Activated CD8-positive, alpha-beta memory T cell treated with anti-CD3 and anti-CD28 coated beads, Interleukin-2, amount 10 ng/mL, durations not matched to agents 7 days and 5 days (primary cell): ENCODE measurements at regions of chr12 and their contacts with region 1.

Region 1: GRCh38 chr12:4276524-4277204 is 3.1 kb downstream of the CCND2 start:
- DNase-seq: peak; percentile 93
- ATAC-seq: peak; percentile 16
- H3K4me3 Mint-ChIP-seq: peak overlapping the region; percentile 88
- H3K27ac Mint-ChIP-seq: peak overlapping the region; percentile 100
- H3K4me1 Mint-ChIP-seq: peaks cover 57% of the 10 kb centered on the region
- H3K27me3 Mint-ChIP-seq: no peaks in the 10 kb centered on the region

Region 2: GRCh38 chr12:3988519-3989448 is 287.9 kb before region 1 on chr12:
- CTCF ChIA-PET with region 1: interaction called, 30 read pairs
- DNase-seq: no peak
- ATAC-seq: peak; percentile 51
- H3K4me3 Mint-ChIP-seq: no peak overlapping the region
- H3K27ac Mint-ChIP-seq: peak overlapping the region; percentile 56
- H3K4me1 Mint-ChIP-seq: peaks cover 22% of the 10 kb centered on the region
- H3K27me3 Mint-ChIP-seq: peaks cover 17% of the 10 kb centered on the region

Region 3: DNA sequence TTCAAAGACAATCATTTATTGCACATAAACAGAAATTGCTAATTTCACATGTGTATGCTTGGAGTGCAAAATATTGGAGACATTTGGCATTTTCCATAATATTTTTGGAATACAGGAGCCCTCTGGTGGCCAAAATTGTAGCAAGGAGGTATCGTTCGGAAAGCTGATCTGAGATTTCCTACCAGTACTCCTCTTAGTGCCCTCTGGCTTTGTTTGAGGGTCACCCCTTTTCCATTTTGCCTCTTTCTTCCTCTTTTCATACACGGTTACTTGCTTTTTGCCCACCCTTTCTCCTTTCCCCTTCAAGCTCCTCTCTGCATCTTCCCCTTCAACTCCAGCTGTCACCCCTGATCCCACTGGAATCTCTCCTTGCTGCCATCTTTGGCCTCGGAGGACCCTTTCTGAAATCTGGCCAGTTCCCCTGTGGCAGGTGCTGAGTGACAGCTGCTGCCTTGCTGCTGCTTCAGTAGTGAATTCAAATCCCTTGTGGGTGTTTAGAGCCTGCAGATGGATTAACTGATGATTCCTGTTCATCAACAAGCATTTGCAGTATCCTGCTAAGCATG is 238.8 kb before region 1 on chr12:
- CTCF ChIA-PET with region 1: interaction called, 23 read pairs
- DNase-seq: no peak
- ATAC-seq: no peak
- H3K4me3 Mint-ChIP-seq: no peak overlapping the region
- H3K27ac Mint-ChIP-seq: no peak overlapping the region
- H3K4me1 Mint-ChIP-seq: peaks cover 6% of the 10 kb centered on the region
- H3K27me3 Mint-ChIP-seq: peaks cover 26% of the 10 kb centered on the region

Region 4: DNA sequence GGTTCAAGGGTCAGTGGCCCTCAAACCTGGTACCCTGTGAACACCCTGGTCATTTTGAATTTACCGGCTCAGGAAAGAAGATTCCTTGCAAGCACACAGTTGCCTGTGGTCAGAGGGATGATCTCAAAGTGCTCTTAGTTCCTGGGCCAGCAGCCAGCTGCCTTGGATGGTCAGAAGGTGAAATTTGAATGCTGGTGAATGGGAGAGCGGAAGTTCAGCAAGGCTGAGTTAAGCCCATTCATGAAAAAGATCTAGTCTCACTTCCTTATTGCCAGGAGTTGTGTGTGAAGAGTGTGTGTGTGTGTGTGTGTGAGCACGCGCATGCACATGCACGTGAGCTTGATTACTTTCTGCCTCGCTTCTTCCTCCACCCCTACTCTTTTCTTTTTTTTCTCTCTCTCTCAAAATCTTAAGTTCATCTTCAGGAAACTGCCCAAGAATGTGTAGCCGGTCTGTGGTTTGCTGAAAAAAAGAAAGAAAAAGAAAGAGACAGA is 158.6 kb before region 1 on chr12:
- CTCF ChIA-PET with region 1: interaction called, 67 read pairs
- DNase-seq: peak; percentile 47
- ATAC-seq: peak; percentile 30
- H3K4me3 Mint-ChIP-seq: peak overlapping the region; percentile 59
- H3K27ac Mint-ChIP-seq: peak overlapping the region; percentile 89
- H3K4me1 Mint-ChIP-seq: peaks cover 70% of the 10 kb centered on the region
- H3K27me3 Mint-ChIP-seq: no peaks in the 10 kb centered on the region

Region 5: DNA sequence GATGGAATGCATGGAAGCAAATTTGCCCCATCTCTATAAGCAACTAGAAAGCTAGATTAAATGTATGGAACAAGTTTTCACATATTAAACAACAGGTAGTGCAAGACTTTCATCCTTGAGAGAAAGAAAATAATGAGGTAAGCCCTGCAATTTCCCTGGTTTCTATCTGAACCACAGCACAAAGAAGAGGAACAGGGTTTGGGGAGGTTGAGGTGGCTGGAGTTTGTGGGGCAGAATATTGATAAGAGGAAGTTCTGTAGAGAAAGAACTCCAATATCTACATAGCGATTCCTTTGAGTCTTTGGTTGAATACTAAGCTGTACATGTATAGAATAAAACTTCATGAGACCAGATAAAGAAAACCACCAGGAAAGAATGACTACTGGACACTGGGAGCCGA is 99.4 kb before region 1 on chr12:
- CTCF ChIA-PET with region 1: interaction called, 14 read pairs
- DNase-seq: no peak
- ATAC-seq: no peak
- H3K4me3 Mint-ChIP-seq: peak overlapping the region; percentile 1
- H3K27ac Mint-ChIP-seq: peak overlapping the region; percentile 52
- H3K4me1 Mint-ChIP-seq: peaks cover 34% of the 10 kb centered on the region
- H3K27me3 Mint-ChIP-seq: no peaks in the 10 kb centered on the region

Region 6: GRCh38 chr12:4197922-4198763 is 78.5 kb before region 1 on chr12:
- CTCF ChIA-PET with region 1: no interaction called
- DNase-seq: no peak
- ATAC-seq: no peak
- H3K4me3 Mint-ChIP-seq: no peak overlapping the region
- H3K27ac Mint-ChIP-seq: no peak overlapping the region
- H3K4me1 Mint-ChIP-seq: peaks cover 9% of the 10 kb centered on the region
- H3K27me3 Mint-ChIP-seq: peaks cover 11% of the 10 kb centered on the region

Region 7: GRCh38 chr12:4228122-4228580 is 48.5 kb before region 1 on chr12:
- CTCF ChIA-PET with region 1: no interaction called
- DNase-seq: no peak
- ATAC-seq: no peak
- H3K4me3 Mint-ChIP-seq: no peak overlapping the region
- H3K27ac Mint-ChIP-seq: no peak overlapping the region
- H3K4me1 Mint-ChIP-seq: peaks cover 8% of the 10 kb centered on the region
- H3K27me3 Mint-ChIP-seq: peaks cover 11% of the 10 kb centered on the region